K562 (cell line): ENCODE measurements at regions of chr16 and their contacts with region 1.

Region 1: DNA sequence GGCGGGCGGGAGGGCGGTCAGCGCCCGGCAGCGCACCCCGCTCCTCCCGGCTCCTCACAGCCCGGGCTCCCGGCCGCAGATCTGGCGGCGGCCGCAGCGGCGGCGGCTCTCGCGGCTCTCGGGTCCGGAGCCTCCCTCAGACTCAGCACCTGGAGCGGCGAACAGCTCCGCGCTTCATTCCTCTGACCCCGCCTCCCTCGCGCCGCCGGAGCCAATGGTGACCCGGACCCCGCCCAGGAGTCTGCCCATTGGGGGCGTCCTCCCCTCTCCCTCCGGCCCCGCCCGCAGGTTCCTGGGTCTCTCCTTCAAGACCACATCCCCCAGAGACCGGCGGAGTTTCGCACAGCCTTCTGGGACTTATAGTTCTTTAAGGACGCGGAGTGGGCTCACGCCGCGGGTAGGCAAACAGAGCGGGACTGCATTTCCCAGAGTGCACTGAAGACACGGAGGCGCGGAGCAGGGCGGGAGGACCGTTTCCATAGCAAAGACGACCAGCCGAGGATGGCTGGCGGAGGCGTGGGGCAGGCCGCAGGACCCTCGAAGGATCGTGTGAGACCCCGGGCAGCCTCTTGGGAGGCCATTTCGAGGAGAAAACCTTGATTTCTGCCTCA is at the start of gene SMPD3:
- DNase-seq: peak; percentile 90 to 96 (median 92)
- ATAC-seq: peak; percentile 98
- H3K4me3 ChIP-seq: peak within 1 kb of the TSS; percentile 13; the same call in 1 of the 2 replicates
- H3K27ac ChIP-seq: no peak within 1 kb of the TSS
- H3K4me1 ChIP-seq: peaks cover 2 to 22% of the 10 kb centered on the region in 2 experiments; a peak in 2 of 5 replicates
- H3K27me3 ChIP-seq: 0 out of 5 replicates have a peak, but pooled peaks cover 0 to 5% of the 10 kb centered on the region in 2 experiments
- CTCF ChIP-seq: no peak
- EP300 ChIP-seq: no peak
- POLR2A ChIP-seq: no peak
- RAD21 ChIP-seq: no peak
- polyA plus RNA-seq, gene SMPD3: 0.03 to 0.08 TPM

Region 2: DNA sequence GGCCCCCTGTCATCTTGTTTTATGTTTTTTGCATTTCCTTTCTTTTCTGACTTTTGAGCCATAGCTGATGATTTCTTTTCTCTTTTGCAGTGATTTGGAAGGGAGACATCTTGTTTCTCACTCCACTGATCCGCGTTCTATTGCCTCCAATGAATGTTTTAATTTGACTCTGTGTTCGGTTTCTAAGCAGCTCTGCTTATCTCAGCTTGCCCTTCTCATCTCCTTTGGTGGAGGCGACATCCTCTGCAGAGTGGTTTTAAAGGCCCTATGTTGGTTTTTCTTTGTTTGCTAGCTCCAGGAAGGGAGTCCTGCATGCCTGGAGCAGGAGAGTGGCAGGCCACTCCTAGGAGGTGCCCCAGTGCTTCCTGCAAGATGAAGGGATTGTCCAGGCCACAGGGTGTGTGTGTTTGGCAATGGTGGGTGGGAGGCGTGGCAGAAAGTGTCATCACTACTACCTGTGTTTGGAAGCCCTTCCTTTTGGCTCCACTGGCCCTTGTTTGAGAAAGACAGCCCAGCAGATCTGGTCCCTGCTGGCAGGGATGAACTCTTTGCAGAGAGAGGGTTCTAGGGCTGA is 13.8 kb before region 1 on chr16:
- CTCF ChIA-PET with region 1: no interaction called
- POLR2A ChIA-PET with region 1: interaction called, 10 read pairs
- in situ Hi-C with region 1: no loop called
- intact Hi-C with region 1: no loop called
- DNase-seq: no peak
- ATAC-seq: no peak
- H3K4me3 ChIP-seq: no peak overlapping the region
- H3K27ac ChIP-seq: no peak overlapping the region
- H3K4me1 ChIP-seq: no peaks in the 10 kb centered on the region
- H3K27me3 ChIP-seq: peaks cover 5 to 8% of the 10 kb centered on the region in 2 experiments; a peak in 3 of 5 replicates
- CTCF ChIP-seq: no peak
- EP300 ChIP-seq: no peak
- POLR2A ChIP-seq: no peak
- RAD21 ChIP-seq: no peak

Region 3: GRCh38 chr16:68508641-68509240 is 60.3 kb after region 1 on chr16:
- CTCF ChIA-PET with region 1: no interaction called
- POLR2A ChIA-PET with region 1: no interaction called
- in situ Hi-C with region 1: no loop called
- intact Hi-C with region 1: loop called (anchors 2 kb)
- DNase-seq: no peak
- ATAC-seq: no peak
- H3K4me3 ChIP-seq: no peak overlapping the region
- H3K27ac ChIP-seq: no peak overlapping the region
- H3K4me1 ChIP-seq: peaks cover 0 to 6% of the 10 kb centered on the region in 2 experiments; a peak in 2 of 5 replicates
- H3K27me3 ChIP-seq: peaks cover 3 to 53% of the 10 kb centered on the region in 2 experiments; a peak in 3 of 5 replicates
- CTCF ChIP-seq: no peak
- EP300 ChIP-seq: no peak
- POLR2A ChIP-seq: no peak
- RAD21 ChIP-seq: no peak

Region 4: DNA sequence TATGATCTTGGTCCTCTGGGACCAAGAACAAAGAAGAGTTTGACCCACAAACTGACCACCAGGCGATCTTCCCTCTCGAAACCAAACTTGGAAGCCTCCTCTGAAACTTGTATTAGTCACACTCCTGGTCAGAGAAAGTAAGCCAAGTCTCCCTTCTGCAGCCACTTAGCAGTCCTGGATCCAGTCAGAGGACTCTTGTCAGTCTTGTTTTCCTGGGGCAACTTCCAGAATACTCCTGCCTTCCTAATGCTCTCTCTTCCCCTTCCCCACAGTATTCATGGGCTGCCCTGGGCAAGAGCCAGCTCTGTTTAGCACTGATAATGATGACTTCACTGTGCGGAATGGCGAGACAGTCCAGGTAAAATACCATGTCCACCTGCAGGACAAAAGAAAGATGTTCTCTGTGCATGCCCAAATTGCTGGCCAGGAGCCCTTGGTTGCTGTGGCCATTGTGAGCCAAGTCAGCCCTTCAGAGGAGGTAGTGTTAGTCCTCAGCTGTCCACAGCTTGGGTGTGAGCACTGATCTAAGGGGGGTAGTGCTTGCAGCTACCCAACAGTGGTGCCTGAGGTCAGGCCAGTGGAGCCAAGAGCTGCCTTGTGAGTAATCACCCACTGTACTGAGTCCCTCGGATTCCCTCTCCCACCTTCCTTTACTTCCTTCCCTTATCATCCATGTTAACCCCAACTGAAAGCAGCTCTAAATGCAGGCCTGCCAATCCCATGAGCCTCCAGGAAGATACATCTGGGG is 227.8 kb after region 1 on chr16:
- CTCF ChIA-PET with region 1: no interaction called
- POLR2A ChIA-PET with region 1: no interaction called
- in situ Hi-C with region 1: no loop called
- intact Hi-C with region 1: no loop called
- DNase-seq: no peak
- ATAC-seq: no peak
- H3K4me3 ChIP-seq: no peak overlapping the region
- H3K27ac ChIP-seq: no peak overlapping the region
- H3K4me1 ChIP-seq: no peaks in the 10 kb centered on the region
- H3K27me3 ChIP-seq: peaks cover 13 to 47% of the 10 kb centered on the region in 2 experiments; a peak in 4 of 5 replicates
- CTCF ChIP-seq: no peak
- EP300 ChIP-seq: no peak
- POLR2A ChIP-seq: no peak
- RAD21 ChIP-seq: no peak